H1 (cell line): ENCODE measurements at regions of chr20 and their contacts with region 1.

Region 1: DNA sequence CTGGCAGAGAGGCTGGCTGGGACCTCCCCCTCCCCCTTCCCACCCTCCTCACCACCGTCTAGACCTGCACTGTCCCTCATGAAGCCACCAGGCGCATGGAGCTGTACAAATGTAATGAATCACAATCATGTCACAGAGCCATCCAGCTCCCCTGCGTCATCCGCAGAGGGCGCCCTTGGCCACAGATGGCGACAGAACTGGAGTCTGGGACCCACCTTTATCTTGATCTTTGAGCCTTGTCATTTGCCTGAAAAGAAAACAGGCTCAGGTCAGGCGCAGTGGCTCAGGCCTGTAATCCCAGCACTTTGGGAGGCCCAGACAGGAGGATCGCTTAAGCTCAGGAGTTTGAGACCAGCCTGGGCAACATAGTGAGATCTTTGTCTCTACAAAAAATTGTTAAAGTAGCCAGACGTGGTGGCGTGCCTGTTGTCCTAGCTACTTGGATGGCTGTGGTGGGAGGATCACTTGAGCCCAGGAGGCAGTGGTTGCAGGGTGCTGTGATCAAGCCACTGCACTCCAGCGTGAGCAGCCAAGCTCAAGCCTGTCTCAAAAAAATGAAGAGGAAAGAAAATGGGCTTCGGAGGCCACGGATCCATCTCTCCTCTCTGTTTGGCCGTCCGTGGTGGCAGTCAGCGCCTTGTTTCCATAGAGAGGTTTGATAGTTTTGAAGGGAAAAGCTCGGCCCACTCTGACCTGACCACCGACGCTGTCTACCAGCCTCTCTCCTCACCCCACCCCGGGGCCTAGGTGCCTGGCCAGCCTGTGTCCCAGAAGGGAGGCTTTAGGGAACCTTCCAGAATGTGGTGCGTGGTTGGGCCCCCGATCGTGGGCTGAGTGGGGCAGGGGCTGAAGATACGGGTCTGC is 6.2 kb downstream of the COL9A3 start:
- DNase-seq: peak in 1 of 2 experiments; percentile 57
- H3K4me3 ChIP-seq: no peak overlapping the region
- H3K27ac ChIP-seq: no peak overlapping the region
- H3K4me1 ChIP-seq: peaks cover 0 to 19% (median 10%) of the 10 kb centered on the region in 4 experiments; a peak in 5 of 7 replicates
- H3K27me3 ChIP-seq: no peaks in the 10 kb centered on the region
- CTCF ChIP-seq: peak; percentile 66 to 70 (median 69)
- EP300 ChIP-seq: no peak
- POLR2A ChIP-seq: no peak
- RAD21 ChIP-seq: peak; percentile 67 to 75

Region 2: GRCh38 chr20:62642040-62642665 is 180.9 kb before region 1 on chr20 and contains the start of gene SLCO4A1:
- CTCF ChIA-PET with region 1: no interaction called
- POLR2A ChIA-PET with region 1: no interaction called
- DNase-seq: peak in 1 of 2 experiments; percentile 84
- H3K4me3 ChIP-seq: peak within 1 kb of the TSS; percentile 45 to 75 (median 64)
- H3K27ac ChIP-seq: no peak within 1 kb of the TSS
- H3K4me1 ChIP-seq: peaks cover 0 to 11% (median 0%) of the 10 kb centered on the region in 4 experiments; a peak in 3 of 7 replicates
- H3K27me3 ChIP-seq: peaks cover 3 to 43% (median 33%) of the 10 kb centered on the region in 4 experiments; a peak in 6 of 7 replicates
- CTCF ChIP-seq: no peak
- EP300 ChIP-seq: no peak
- POLR2A ChIP-seq: no peak
- RAD21 ChIP-seq: no peak
- total RNA-seq, gene SLCO4A1: 18.2 and 18.5 TPM in 2 replicates

Region 3: GRCh38 chr20:62755817-62756724 is 66.9 kb before region 1 on chr20:
- CTCF ChIA-PET with region 1: no interaction called
- POLR2A ChIA-PET with region 1: no interaction called
- DNase-seq: no peak
- H3K4me3 ChIP-seq: no peak overlapping the region
- H3K27ac ChIP-seq: no peak overlapping the region
- H3K4me1 ChIP-seq: peaks cover 0 to 10% (median 6%) of the 10 kb centered on the region in 4 experiments; a peak in 5 of 7 replicates
- H3K27me3 ChIP-seq: no peaks in the 10 kb centered on the region; a peak in 2 of 7 replicates
- CTCF ChIP-seq: no peak
- EP300 ChIP-seq: no peak
- POLR2A ChIP-seq: no peak
- RAD21 ChIP-seq: no peak

Region 4: DNA sequence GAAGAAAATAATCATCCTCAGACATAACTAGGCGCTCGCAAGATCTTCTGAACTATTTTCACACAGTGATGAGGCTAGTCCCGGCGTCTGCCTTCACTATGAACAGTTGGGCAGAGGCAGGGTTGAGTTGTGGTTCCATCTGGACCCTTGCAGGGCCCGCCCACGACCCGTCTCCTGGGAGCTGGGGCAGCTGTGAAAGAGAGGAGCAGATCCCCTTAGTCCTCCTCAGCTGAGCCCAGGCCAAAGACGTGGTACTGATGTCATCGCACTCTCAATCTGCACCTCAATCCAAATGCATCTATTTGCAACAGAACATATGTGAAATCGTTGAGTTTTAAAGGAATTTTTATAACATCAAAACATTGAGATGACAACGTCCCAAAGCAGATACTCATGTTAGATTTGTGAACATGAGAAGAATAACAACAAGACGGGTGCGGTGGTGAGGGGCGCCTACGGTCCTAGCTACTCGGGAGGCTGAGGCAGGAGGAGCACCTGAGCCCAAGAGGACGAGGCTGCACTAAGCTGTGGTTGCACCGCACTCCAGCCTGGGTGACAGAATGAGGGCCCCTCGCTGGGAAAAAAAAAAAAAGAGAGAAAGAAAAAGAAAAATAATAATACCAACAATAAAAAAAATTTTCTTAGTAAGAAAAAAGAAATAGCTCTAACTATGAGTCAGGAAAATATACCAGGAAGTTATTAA is 23.3 kb after region 1 on chr20:
- CTCF ChIA-PET with region 1: interaction called, 27 read pairs
- POLR2A ChIA-PET with region 1: interaction called, 13 read pairs
- DNase-seq: no peak
- H3K4me3 ChIP-seq: no peak overlapping the region
- H3K27ac ChIP-seq: no peak overlapping the region
- H3K4me1 ChIP-seq: peaks cover 0 to 3% (median 0%) of the 10 kb centered on the region in 4 experiments; a peak in 3 of 7 replicates
- H3K27me3 ChIP-seq: no peaks in the 10 kb centered on the region
- CTCF ChIP-seq: no peak
- EP300 ChIP-seq: no peak
- POLR2A ChIP-seq: no peak
- RAD21 ChIP-seq: no peak

Region 5: DNA sequence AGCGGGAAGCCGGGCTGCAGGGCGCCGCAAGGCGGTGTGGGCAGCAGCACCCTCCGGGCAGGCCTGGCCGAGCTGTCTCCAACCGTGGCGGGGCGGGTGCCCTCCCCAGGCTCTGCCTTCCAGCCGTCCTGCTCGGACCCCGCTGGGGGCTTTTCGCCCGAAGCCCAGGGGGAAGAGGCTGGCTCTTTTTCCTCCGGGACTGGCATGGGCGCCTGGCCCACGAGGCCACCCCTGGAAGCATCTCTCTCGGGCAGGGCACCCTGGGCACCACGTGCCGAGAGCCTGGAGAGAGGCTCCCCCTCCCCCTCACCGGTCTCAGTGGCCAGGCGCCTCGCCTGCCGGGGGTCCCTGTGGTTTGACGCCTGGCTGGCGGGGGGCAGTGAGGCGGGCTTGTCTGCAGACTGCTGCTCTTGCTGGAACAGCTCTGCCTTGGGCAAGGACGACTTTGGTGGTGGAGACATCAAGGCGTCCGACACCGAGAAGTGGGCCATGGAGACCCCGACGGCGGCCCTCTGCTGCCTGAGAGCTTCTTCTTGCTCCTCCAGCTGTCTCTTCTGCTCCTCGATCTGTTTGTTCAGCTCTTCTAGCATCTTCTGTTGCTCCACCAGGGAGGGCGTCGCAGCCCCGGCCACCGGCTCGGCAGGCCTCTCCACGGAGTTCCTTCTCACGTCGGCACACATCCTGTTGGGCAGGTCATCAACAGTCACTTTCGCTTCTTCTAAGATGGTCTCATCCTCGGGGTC is 58.1 kb after region 1 on chr20:
- CTCF ChIA-PET with region 1: no interaction called
- POLR2A ChIA-PET with region 1: no interaction called
- DNase-seq: no peak
- H3K4me3 ChIP-seq: no peak overlapping the region
- H3K27ac ChIP-seq: no peak overlapping the region
- H3K4me1 ChIP-seq: peaks cover 0 to 18% (median 10%) of the 10 kb centered on the region in 4 experiments; a peak in 5 of 7 replicates
- H3K27me3 ChIP-seq: no peaks in the 10 kb centered on the region
- CTCF ChIP-seq: no peak
- EP300 ChIP-seq: no peak
- POLR2A ChIP-seq: no peak
- RAD21 ChIP-seq: no peak